ENCODE measurements at regions of chr11 and their contacts with region 1.

Region 1: DNA sequence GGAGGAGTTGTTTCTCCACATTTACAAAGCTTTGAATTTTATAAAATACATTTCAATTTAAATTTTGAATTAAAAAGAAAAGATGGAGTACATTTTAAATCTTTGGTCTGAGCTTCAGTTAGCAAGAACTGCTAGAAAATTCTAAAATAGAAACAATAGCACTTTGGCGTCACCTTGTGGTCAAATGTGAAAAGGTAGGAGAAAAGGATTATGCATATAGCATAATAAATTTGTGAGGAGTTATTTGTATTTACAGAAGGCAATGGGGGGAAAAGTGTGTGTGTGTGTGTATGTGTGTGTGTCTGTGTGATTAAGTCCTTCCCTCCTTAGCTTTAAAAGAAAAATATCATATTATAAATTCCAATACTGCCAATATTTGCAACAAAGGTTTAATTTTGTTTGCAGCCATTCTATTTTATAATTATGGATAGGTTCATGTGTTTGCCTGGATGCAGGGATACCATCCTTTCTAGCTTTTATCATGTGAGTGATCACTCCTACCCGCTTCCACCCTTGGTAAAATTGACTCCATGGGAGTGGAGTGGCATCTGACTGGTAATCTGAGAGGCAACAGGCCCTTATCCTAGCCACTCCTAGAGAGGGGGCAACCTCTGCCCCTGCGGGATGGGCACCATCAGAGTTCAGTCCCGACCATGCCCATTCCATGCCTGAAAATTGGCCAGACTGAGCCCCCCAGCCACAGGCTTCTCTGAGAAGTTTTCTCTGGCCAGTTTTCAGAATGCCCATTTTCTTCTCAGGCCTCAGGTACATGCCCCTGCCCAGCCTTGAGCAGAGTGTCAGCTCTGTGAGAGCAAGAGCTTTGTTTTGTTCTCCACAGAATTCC is 13.6 kb upstream of the LGR4 start:
- DNase-seq: peak; percentile 57 to 81 (median 74)
- H3K4me3 ChIP-seq: no peak overlapping the region
- H3K27ac ChIP-seq: no peak overlapping the region
- H3K4me1 ChIP-seq: no peaks in the 10 kb centered on the region
- H3K27me3 ChIP-seq: no peaks in the 10 kb centered on the region

Region 2: DNA sequence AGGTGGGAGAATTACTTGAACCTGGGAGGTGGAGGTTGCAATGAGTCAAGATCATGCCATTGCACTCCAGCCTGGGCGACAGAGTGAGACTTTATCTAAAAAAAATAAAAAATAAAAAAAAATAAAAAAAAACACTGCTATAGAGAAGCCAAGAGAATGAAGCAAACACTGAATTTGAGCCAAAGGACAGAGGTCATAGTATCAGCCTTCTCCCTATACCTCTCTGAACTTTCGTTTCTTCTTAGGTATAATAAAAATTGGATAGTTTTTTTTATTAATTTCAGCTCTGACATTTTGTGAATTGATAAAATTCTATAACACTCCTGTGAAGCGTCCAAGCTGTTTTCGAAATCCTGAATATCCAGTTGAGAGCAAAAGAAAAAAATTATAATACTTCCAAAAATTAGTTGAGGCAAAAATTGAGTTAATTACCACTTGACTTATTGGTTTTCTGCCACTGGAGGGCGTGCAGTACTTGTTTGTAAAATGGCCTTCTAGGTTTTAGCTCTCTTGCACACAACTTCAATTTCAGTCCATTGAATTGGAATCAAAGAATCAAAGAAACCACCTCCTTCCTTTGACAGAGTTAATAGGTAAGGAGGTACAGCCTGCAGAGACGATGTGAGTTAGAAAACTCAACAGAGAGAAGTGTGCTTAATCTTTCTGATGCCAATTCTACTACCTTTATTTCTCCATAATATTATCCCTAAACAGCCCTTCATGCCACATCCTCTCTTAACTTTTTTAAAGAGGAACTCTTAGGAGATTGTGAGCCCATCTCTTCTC is 302.3 kb before region 1 on chr11:
- CTCF ChIA-PET with region 1: interaction called, 88 read pairs
- POLR2A ChIA-PET with region 1: no interaction called
- DNase-seq: peak; percentile 50 to 74 (median 70)
- H3K4me3 ChIP-seq: no peak overlapping the region
- H3K27ac ChIP-seq: no peak overlapping the region
- H3K4me1 ChIP-seq: no peaks in the 10 kb centered on the region
- H3K27me3 ChIP-seq: peaks cover 0 to 14% (median 12%) of the 10 kb centered on the region in 5 experiments

Region 3: DNA sequence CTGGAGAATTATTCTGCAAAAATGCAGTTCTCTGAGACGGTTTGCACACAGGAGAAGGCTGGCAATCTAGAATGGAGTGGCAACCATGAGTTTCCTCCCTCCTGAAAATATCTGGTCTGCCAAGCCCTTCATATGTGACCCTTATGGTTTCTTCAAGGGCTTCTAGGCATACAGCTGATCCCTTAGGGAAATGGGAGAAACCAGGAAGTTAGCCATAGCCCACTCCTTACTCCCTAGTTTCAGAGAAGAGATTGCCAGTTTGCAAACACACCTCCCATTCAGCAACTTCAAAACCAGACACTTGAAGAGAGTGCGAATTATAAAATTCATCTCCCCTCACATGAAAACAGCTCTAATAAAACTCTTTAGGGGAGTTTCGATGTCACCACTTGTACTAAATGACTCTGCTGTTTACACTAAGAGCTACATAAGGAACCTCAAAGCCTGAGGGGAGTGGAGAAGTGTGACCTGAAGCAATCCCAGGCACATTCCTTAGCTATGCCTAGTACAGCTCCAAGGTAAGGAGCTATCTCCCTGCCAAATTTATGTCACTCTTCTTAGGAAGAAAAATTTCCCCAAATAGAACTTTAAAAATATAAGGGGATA is 21.9 kb before region 1 on chr11:
- CTCF ChIA-PET with region 1: interaction called, 13 read pairs
- POLR2A ChIA-PET with region 1: no interaction called
- DNase-seq: no peak
- H3K4me3 ChIP-seq: no peak overlapping the region
- H3K27ac ChIP-seq: no peak overlapping the region
- H3K4me1 ChIP-seq: peaks cover 0 to 3% (median 0%) of the 10 kb centered on the region in 4 experiments
- H3K27me3 ChIP-seq: no peaks in the 10 kb centered on the region

Region 4: DNA sequence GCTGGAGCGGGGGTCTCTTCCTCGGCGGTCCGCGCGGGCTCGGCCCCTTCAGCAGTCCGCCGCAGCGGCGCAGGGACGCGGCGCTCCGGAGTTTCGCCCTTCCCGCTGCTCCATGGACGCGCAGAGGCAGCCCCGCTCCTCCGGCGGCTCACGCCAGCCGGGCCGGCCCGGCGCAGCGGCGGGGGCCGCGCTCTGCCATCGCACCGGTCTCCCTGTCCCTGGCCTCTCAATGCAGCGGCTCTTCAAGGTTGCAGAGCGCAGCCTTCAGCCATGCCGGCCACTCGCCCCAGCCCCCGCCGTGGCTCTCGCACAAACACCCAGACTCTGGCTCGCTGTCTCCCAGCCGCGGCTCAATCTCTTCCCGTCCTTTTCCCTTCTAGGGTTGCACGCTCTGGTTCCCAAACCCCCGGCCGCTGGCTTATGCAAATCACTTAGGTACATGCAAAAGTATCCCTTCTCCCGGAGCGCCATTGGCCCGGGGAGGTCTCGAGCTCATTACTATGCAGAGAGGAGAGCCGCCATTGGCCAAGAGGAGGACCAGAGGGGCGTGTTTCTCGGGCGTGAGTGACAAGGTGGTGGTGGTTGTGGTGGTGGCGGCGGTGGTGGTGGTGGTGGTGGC is 13.6 kb before region 1 on chr11 and contains the start of gene LGR4:
- CTCF ChIA-PET with region 1: interaction called, 13 read pairs
- POLR2A ChIA-PET with region 1: no interaction called
- DNase-seq: peak; percentile 90 to 94 (median 92)
- H3K4me3 ChIP-seq: peak within 1 kb of the TSS; percentile 72 to 97 (median 81)
- H3K27ac ChIP-seq: no peak within 1 kb of the TSS
- H3K4me1 ChIP-seq: peaks cover 6 to 17% (median 14%) of the 10 kb centered on the region in 4 experiments
- H3K27me3 ChIP-seq: peaks cover 0 to 4% (median 0%) of the 10 kb centered on the region in 5 experiments

Region 5: DNA sequence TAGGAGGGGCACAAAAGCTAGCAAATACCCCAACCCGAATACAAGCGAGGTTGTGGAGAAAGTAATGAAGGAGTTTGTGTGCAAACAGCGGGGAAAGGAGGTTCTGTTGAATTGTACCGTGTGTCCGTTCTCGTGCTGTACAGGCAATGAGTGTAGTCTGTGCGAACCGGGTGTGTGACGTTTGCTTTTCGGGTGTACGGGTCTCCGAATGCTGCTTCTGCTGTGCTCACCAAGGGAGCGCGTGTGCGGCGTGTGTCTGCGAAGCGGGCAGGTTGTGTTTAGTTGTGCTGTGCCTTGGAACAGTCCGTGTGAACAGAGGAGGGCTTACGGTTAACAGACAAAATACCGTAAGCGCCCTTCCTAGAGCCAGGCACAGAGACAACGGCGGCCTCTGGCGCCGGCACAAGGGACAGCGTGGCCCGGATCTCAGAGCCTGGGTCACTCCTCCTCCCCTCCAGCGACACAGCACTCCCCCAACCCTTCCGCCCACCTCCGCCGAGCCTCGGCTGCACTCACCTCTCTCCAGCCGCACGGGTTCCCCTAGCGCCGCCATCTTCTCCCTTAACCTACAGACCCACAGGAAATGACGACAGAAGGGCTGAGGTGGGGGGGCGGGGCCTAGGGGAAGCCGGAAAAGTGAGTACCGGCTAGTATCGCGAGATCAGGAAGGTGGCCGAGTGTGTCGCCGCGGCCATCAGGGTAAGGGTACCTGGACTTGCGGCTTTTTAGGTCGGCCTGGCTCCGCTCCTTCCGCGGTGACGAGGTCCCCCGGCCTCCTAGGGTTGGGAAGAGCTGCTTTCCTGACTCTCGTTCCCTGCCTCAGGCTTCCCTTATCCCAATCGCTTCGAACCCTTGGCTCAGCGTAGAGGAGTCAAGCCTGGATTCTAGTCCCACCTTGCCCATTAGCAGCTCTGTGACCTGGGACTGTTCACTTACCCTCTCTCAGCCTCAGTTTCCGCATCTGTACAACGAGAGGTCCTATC is 20.3 kb after region 1 on chr11 and contains the start of gene LIN7C:
- CTCF ChIA-PET with region 1: interaction called, 124 read pairs
- POLR2A ChIA-PET with region 1: no interaction called
- DNase-seq: peak; percentile 98
- H3K4me3 ChIP-seq: peak within 1 kb of the TSS; percentile 82 to 100 (median 97)
- H3K27ac ChIP-seq: peak within 1 kb of the TSS; percentile 89 to 97
- H3K4me1 ChIP-seq: peaks cover 8 to 25% (median 15%) of the 10 kb centered on the region in 4 experiments
- H3K27me3 ChIP-seq: no peaks in the 10 kb centered on the region

Region 6: DNA sequence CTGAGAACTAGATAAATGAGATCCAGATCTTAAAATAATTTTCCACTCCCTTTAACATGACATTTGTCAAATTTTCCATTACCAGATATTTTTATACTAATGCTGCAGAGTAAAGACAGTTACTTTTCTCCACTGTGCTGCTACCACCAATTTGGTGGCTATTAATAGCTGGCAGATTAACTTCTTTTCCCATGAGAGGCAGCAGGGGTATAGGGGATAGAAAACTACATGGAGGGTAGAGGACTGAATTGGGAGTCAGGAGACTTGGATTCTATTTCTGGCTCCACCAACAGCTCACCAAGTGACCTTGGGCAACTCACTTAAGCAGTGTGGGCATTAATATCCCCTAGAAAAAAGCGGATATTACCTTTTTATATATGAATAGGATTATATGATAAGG is 552.6 kb after region 1 on chr11:
- CTCF ChIA-PET with region 1: no interaction called
- POLR2A ChIA-PET with region 1: no interaction called
- DNase-seq: no peak
- H3K4me3 ChIP-seq: no peak overlapping the region
- H3K27ac ChIP-seq: no peak overlapping the region
- H3K4me1 ChIP-seq: no peaks in the 10 kb centered on the region
- H3K27me3 ChIP-seq: no peaks in the 10 kb centered on the region